Posterior vena cava (tissue), 2 donors: ENCODE measurements at regions of chr21 and their contacts with region 1.

Region 1: DNA sequence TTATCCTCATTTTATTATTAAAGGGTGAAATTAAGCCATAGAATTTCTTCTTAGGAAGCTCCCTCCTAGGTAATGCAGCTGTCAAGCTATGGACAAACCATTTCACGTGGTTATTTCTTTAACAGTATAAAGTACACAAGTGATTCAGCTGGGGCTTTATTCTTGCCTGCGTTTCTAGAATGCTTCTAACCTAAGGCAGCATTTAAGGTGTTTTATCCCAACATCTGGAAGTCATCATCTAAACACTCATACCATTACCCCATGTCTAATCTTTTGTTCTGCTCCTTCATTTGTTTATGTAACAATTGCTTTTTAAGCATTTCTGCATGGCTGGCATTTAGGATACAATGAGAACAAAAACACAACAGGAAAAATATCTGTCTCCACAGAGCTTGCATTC is 829.2 kb upstream of the ADAMTS5 start:
- DNase-seq: no peak

Region 2: GRCh38 chr21:27756191-27756590 is 39.9 kb before region 1 on chr21:
- intact Hi-C with region 1: loop called in 1 of 2 experiments (anchors 2 kb)
- DNase-seq: no peak